Caco-2 (cell line): ENCODE measurements at regions of chr5 and their contacts with region 1.

Region 1: GRCh38 chr5:88729084-88729828 is 153.7 kb downstream of the MEF2C start:
- DNase-seq: peak; percentile 58 to 68
- H3K4me3 ChIP-seq: no peak overlapping the region
- H3K4me3 Mint-ChIP-seq: no peak overlapping the region
- H3K27ac Mint-ChIP-seq: no peak overlapping the region
- H3K4me1 ChIP-seq: no peaks in the 10 kb centered on the region
- H3K4me1 Mint-ChIP-seq: no peaks in the 10 kb centered on the region
- H3K27me3 ChIP-seq: no peaks in the 10 kb centered on the region
- H3K27me3 Mint-ChIP-seq: peaks cover 3% of the 10 kb centered on the region
- CTCF ChIP-seq: peak; percentile 69 to 73

Region 2: DNA sequence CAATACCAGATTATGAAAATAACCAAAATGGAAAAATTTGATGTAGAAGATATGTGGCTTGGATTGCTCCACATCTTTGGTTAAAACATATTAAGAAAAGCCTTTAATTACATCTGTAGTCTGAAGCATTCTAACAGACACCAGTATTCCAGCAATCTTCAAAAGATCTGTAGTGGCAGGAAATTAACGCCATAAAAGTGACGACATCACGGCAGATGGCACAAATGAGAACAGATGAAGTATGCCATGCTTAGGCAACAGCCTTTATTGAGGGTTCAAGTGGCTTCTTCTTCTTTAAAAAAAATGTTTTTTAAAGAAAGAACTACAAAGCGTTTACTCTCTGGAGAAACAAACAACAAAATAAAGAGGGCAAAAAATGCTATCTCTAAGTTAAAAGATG is 10.5 kb before region 1 on chr5:
- CTCF ChIA-PET with region 1: no interaction called
- POLR2A ChIA-PET with region 1: no interaction called
- intact Hi-C with region 1: no loop called
- DNase-seq: no peak
- H3K4me3 ChIP-seq: no peak overlapping the region
- H3K4me3 Mint-ChIP-seq: no peak overlapping the region
- H3K27ac Mint-ChIP-seq: no peak overlapping the region
- H3K4me1 ChIP-seq: no peaks in the 10 kb centered on the region
- H3K4me1 Mint-ChIP-seq: no peaks in the 10 kb centered on the region
- H3K27me3 ChIP-seq: no peaks in the 10 kb centered on the region
- H3K27me3 Mint-ChIP-seq: peaks cover 5% of the 10 kb centered on the region
- CTCF ChIP-seq: no peak

Region 3: GRCh38 chr5:88892669-88893068 is 163.4 kb after region 1 on chr5:
- CTCF ChIA-PET with region 1: no interaction called
- POLR2A ChIA-PET with region 1: no interaction called
- intact Hi-C with region 1: no loop called
- DNase-seq: peak; percentile 42 to 58
- H3K4me3 ChIP-seq: no peak overlapping the region
- H3K4me3 Mint-ChIP-seq: no peak overlapping the region
- H3K27ac Mint-ChIP-seq: no peak overlapping the region
- H3K4me1 ChIP-seq: peaks cover 11% of the 10 kb centered on the region
- H3K4me1 Mint-ChIP-seq: no peaks in the 10 kb centered on the region
- H3K27me3 ChIP-seq: no peaks in the 10 kb centered on the region
- H3K27me3 Mint-ChIP-seq: no peaks in the 10 kb centered on the region
- CTCF ChIP-seq: no peak

Region 4: DNA sequence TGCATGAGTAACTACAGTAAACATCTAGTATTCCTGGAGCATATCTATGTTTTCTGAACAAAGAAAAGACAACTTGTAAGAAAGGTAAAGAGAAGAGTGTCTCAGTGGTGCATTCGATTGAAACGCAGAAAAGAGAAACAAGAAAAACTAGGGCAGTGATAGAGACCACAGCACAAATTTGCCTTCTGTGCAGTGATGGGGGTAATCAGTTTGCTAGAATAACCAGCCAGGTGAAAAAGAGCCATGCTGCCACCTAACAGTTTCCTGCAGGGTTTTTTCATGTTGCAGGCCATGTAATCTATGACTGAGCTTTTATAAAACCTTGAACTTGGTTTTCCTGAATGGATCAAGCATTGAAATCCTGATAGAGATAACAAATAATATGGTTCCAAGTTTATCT is 352.1 kb after region 1 on chr5:
- CTCF ChIA-PET with region 1: no interaction called
- POLR2A ChIA-PET with region 1: no interaction called
- intact Hi-C with region 1: loop called (anchors 10 kb)
- DNase-seq: no peak
- H3K4me3 ChIP-seq: no peak overlapping the region
- H3K4me3 Mint-ChIP-seq: no peak overlapping the region
- H3K27ac Mint-ChIP-seq: no peak overlapping the region
- H3K4me1 ChIP-seq: no peaks in the 10 kb centered on the region
- H3K4me1 Mint-ChIP-seq: no peaks in the 10 kb centered on the region
- H3K27me3 ChIP-seq: no peaks in the 10 kb centered on the region
- H3K27me3 Mint-ChIP-seq: no peaks in the 10 kb centered on the region
- CTCF ChIP-seq: no peak

Region 5: GRCh38 chr5:89729623-89730301 is 1000.5 kb after region 1 on chr5:
- CTCF ChIA-PET with region 1: no interaction called
- POLR2A ChIA-PET with region 1: no interaction called
- intact Hi-C with region 1: loop called (anchors 1 kb)
- DNase-seq: peak in 1 of 2 experiments; percentile 3
- H3K4me3 ChIP-seq: no peak overlapping the region
- H3K4me3 Mint-ChIP-seq: no peak overlapping the region
- H3K27ac Mint-ChIP-seq: no peak overlapping the region
- H3K4me1 ChIP-seq: no peaks in the 10 kb centered on the region
- H3K4me1 Mint-ChIP-seq: no peaks in the 10 kb centered on the region
- H3K27me3 ChIP-seq: no peaks in the 10 kb centered on the region
- H3K27me3 Mint-ChIP-seq: peaks cover 6% of the 10 kb centered on the region
- CTCF ChIP-seq: peak; percentile 32 to 35

Region 6: GRCh38 chr5:90184764-90185163 is 1455.5 kb after region 1 on chr5:
- CTCF ChIA-PET with region 1: no interaction called
- POLR2A ChIA-PET with region 1: no interaction called
- intact Hi-C with region 1: loop called (anchors 5 kb)
- DNase-seq: no peak
- H3K4me3 ChIP-seq: no peak overlapping the region
- H3K4me3 Mint-ChIP-seq: no peak overlapping the region
- H3K27ac Mint-ChIP-seq: no peak overlapping the region
- H3K4me1 ChIP-seq: no peaks in the 10 kb centered on the region; the same call in 1 of the 2 replicates
- H3K4me1 Mint-ChIP-seq: peaks cover 6% of the 10 kb centered on the region
- H3K27me3 ChIP-seq: no peaks in the 10 kb centered on the region
- H3K27me3 Mint-ChIP-seq: no peaks in the 10 kb centered on the region
- CTCF ChIP-seq: no peak

Region 7: DNA sequence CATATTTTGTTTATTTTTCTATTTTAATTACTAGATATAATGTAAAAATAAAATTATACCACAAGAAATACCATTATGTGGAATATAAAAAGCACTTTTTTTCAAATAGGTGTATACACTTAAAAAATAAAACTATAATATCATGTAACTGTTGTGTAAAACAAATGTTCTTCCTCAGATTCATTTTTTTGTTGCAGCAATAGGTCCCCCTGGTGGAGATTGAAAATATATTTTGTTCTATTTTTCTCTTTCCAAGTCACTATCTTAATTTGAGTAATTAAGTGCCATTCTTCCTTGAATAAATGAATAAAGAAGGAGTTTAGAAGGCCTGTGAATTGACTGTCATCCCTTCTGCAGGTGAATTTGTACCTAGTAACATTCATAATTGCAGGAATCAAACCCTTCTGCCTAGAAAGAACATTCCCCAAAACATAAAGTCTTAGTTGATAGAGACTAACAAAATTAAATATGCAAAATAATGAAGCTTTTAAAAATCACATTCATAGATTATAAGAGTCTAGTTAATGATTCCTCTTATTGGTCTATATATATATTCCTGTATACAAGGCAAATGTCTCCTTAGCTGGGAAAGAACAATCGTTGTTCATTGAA is 1656.9 kb after region 1 on chr5:
- CTCF ChIA-PET with region 1: no interaction called
- POLR2A ChIA-PET with region 1: no interaction called
- intact Hi-C with region 1: loop called (anchors 1 kb)
- DNase-seq: peak in 1 of 2 experiments; percentile 15
- H3K4me3 ChIP-seq: no peak overlapping the region
- H3K4me3 Mint-ChIP-seq: no peak overlapping the region
- H3K27ac Mint-ChIP-seq: no peak overlapping the region
- H3K4me1 ChIP-seq: no peaks in the 10 kb centered on the region
- H3K4me1 Mint-ChIP-seq: peaks cover 6% of the 10 kb centered on the region
- H3K27me3 ChIP-seq: no peaks in the 10 kb centered on the region
- H3K27me3 Mint-ChIP-seq: no peaks in the 10 kb centered on the region
- CTCF ChIP-seq: peak; percentile 51 to 61

Region 8: DNA sequence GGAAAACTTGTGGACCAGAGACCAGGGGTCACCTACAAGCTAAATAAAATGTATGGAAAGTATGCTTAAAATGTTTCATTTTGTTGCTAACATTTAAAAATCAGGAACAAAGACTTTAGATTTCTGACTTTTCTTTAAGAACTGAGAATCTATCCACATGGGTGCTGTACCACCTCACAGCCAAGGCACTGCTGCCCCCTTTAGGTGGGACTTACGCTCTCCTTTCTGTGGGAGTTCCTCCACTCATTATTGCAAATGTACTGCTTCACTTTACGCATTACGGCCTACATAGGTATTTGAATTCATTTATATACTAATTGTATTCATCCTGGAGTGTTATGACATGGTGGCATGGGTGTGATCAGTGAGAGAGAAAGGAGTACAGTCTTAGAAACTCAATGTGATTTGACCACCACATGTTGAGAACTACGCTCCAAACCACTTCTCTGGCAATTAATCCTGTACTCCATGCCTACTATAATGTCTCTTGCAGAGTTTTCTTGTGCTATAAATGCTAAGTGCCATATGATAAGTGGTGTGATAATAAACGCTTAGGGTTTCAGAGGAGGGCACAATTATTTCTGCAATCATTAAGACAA is 1705.0 kb after region 1 on chr5:
- CTCF ChIA-PET with region 1: no interaction called
- POLR2A ChIA-PET with region 1: no interaction called
- intact Hi-C with region 1: loop called (anchors 1 kb)
- DNase-seq: peak; percentile 55 to 77
- H3K4me3 ChIP-seq: no peak overlapping the region
- H3K4me3 Mint-ChIP-seq: no peak overlapping the region
- H3K27ac Mint-ChIP-seq: no peak overlapping the region
- H3K4me1 ChIP-seq: peaks cover 5% of the 10 kb centered on the region; the same call in 1 of the 2 replicates
- H3K4me1 Mint-ChIP-seq: peaks cover 6% of the 10 kb centered on the region
- H3K27me3 ChIP-seq: no peaks in the 10 kb centered on the region
- H3K27me3 Mint-ChIP-seq: peaks cover 10% of the 10 kb centered on the region
- CTCF ChIP-seq: peak; percentile 73 to 86